GM10248 (cell line): ENCODE measurements at regions of chr2 and their contacts with region 1.

Region 1: DNA sequence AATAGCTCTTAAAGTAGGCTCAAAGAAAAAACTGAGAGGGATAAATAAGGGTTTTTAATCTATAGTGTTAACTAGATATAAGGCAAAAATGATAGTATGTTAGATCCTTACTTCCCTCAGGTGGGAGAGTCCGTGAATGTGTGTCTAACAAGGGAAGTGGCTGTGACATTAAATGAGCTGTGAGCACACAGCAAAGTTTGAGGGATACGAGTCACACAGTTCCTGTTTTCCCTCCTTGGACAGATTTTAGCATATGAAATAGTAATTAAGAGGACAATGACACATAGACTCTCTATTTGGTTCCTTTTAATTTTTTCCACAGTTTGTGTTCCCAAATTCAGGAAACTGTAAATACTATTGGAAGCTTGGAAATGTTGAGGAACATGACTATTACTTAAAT is 148.4 kb upstream of the CAVIN2 start:
- DNase-seq: no peak
- CTCF ChIP-seq: no peak

Region 2: GRCh38 chr2:192010073-192010472 is 14.8 kb after region 1 on chr2:
- CTCF ChIA-PET with region 1: interaction called, 11 read pairs
- POLR2A ChIA-PET with region 1: no interaction called
- DNase-seq: no peak
- CTCF ChIP-seq: no peak